Activated CD4-positive, alpha-beta T cell treated with anti-CD3 and anti-CD28 coated beads for 36 hours (primary cell): ENCODE measurements at regions of chr19 and their contacts with region 1.

Region 1: DNA sequence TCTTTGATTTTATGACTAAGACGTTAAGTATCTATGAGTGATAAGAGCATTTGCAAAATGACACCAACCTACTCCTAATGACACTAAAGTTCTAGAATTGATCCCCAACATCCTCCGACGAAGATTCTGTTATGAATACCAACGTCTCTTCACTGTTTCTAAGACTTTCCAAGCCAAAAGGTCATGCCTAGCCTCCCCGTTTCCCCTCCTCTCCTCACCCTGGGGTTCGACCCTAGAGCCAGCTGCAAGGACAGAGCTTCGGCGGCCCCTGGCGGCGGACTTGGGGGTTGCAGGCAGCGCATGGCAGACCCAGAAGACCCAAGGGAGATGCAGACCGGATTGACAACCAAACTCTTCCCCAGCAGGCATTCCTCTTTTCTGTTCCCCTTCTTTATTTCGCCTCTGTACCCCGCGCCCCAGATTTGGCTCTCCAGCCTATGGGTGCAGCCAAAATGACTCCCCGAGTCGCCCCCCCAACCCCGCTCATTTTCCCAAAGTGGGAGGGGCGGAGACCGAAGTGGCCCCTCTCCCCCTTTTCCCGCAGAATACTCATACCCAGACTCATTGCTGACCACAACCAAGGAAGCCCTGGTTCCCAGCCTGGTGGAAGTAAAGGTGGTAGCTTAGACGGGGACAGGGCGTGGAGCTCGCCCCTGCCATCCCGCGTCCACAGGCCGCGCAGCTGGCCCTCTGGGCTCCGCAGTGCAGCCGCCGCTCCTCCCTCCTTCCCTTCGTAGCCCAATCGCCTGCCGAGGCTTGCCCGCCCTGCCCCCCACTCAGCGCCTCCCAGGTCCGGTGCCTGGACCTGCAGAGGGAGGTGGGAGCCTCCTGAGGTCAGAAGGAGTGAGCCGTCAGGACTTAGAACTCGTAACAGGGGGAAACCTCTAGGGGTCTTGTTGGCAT is 4.1 kb upstream of the EML2 start:
- DNase-seq: peak; percentile 97
- ATAC-seq: peak; percentile 54
- H3K4me3 Mint-ChIP-seq: peak overlapping the region; percentile 94
- H3K27ac Mint-ChIP-seq: peak overlapping the region; percentile 93
- H3K4me1 Mint-ChIP-seq: peaks cover 57% of the 10 kb centered on the region
- H3K27me3 Mint-ChIP-seq: no peaks in the 10 kb centered on the region

Region 2: GRCh38 chr19:45423589-45424190 is 219.6 kb before region 1 on chr19 and contains the start of gene ERCC1:
- CTCF ChIA-PET with region 1: no interaction called
- POLR2A ChIA-PET with region 1: no interaction called
- intact Hi-C with region 1: loop called in 1 of 2 experiments (anchors 1 kb)
- DNase-seq: peak; percentile 84
- ATAC-seq: peak; percentile 78
- H3K4me3 Mint-ChIP-seq: peak within 1 kb of the TSS; percentile 92
- H3K27ac Mint-ChIP-seq: peak within 1 kb of the TSS; percentile 95
- H3K4me1 Mint-ChIP-seq: peaks cover 55% of the 10 kb centered on the region
- H3K27me3 Mint-ChIP-seq: peaks cover 2% of the 10 kb centered on the region
- total RNA-seq, gene ERCC1: 58.1 to 71.8 TPM

Region 3: GRCh38 chr19:45496349-45496953 is 146.8 kb before region 1 on chr19:
- CTCF ChIA-PET with region 1: interaction called, 10 read pairs
- POLR2A ChIA-PET with region 1: interaction called, 3 read pairs
- intact Hi-C with region 1: loop called in 1 of 2 experiments (anchors 2 kb)
- DNase-seq: peak; percentile 74
- ATAC-seq: peak; percentile 1
- H3K4me3 Mint-ChIP-seq: peak overlapping the region; percentile 6
- H3K27ac Mint-ChIP-seq: no peak overlapping the region
- H3K4me1 Mint-ChIP-seq: peaks cover 43% of the 10 kb centered on the region
- H3K27me3 Mint-ChIP-seq: peaks cover 31% of the 10 kb centered on the region

Region 4: DNA sequence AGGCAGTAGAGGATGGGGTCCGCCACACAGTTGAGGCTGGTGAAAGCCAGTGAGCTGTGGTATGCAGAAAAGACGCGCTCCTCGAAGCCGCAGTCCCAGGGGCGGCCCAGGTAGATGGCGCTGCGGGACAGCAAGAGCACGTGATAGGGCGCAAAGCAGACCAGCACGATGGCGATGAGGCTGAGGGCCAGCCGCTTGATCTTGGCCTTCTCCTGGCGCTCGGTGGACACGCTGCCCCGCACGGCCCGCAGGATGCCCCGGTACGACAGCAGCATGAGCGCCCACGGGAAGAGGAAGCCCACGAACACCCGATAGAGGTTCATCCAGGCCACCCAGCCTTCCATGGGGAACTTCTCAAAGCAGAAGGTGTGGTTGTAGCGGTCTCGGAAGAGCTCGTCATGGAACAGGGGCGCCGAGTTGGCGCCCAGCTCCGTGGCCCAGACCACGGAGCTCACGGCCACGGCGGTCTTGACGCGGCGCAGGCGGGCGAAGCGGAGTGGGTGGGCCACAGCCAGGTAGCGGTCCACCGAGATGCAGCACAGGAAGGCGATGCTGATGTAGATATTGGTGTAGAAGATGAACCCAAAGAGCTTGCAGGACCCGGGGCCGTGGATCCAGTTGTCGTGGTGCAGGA is 52.2 kb before region 1 on chr19:
- CTCF ChIA-PET with region 1: interaction called, 9 read pairs
- POLR2A ChIA-PET with region 1: no interaction called
- intact Hi-C with region 1: loop called in 1 of 2 experiments (anchors 1 kb)
- DNase-seq: peak; percentile 79
- ATAC-seq: peak; percentile 89
- H3K4me3 Mint-ChIP-seq: no peak overlapping the region
- H3K27ac Mint-ChIP-seq: no peak overlapping the region
- H3K4me1 Mint-ChIP-seq: peaks cover 11% of the 10 kb centered on the region
- H3K27me3 Mint-ChIP-seq: peaks cover 30% of the 10 kb centered on the region

Region 5: DNA sequence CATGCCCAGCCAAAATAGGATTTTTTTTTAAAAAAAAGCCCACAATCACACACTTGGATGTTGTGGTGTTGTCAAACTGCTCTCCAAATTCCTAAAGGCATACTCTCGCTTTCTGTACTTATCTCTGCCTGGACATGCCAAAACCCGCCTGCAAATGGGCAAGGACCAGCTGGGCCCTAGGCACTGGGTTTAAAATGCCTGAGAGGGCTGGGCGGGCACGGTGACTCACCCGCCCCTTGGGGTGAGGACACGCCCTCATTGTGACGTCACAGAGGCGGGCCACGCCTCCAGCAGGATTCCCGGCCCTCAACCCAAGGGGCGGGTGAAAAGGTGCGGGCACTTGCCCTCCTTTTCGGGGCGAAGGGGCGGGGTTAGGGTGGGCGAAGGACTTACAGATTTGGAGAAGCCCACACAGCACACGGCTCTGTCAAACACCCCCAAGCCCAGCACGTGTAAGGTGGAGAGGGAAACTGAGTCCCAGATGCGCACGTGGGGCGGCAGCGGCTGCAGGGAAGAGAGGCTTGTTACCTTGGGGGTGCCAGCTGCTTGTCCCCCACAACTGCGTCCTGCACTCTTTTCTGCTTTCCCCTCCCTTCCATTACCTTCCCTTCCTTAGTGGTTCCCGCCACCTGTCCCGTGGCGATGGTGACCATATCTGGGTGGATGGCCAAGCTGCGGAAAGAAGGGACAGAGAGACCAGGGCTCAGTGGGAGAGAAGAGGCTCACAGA is 10.6 kb before region 1 on chr19:
- CTCF ChIA-PET with region 1: interaction called, 24 read pairs
- POLR2A ChIA-PET with region 1: interaction called, 17 read pairs
- intact Hi-C with region 1: loop called (anchors 1 kb)
- DNase-seq: peak; percentile 79
- ATAC-seq: peak; percentile 54
- H3K4me3 Mint-ChIP-seq: no peak overlapping the region
- H3K27ac Mint-ChIP-seq: peak overlapping the region; percentile 60
- H3K4me1 Mint-ChIP-seq: peaks cover 19% of the 10 kb centered on the region
- H3K27me3 Mint-ChIP-seq: no peaks in the 10 kb centered on the region

Region 6: DNA sequence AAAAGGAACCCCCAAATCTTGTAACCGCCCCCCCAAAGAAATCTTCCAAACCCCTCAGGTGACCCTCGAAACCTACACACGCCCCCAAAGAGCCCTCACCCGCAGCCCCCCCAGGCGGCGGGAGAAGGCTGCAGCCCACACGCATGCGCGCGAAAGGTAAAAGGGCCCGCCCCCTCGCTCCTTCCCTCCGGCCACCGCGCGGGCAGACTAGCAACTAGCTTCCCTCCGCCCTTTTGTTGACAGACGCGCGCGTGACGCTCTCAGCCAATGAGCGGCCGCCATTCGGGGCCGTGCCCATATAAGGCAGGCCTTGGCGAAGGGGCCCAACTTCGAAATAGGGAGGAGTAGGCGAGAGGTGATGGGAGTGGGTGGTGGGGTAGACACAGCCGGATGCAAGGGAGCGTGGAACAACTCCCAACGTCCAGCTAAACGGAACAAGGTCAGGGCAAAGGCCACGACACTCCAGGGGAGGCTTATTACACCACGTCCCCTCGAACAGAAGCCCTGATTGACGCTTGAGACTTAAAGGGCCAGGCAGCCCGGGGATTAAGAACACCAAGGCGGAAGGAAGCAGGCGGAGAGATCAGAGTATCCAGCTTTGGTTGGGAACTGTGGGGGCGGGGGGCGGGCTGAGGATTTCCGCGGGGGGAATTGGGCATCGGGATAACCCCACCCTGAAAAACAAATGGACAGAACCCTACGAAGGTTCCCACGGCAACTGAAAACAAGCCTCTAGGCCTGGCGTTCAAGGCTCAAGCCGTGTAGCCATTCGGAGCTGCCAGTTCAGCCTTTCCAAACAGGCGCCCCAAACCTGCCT is 74.1 kb after region 1 on chr19:
- CTCF ChIA-PET with region 1: no interaction called
- POLR2A ChIA-PET with region 1: interaction called, 8 read pairs
- intact Hi-C with region 1: loop called in 1 of 2 experiments (anchors 1 kb)
- DNase-seq: peak; percentile 99
- ATAC-seq: peak; percentile 97
- H3K4me3 Mint-ChIP-seq: peak overlapping the region; percentile 93
- H3K27ac Mint-ChIP-seq: peak overlapping the region; percentile 94
- H3K4me1 Mint-ChIP-seq: peaks cover 40% of the 10 kb centered on the region
- H3K27me3 Mint-ChIP-seq: no peaks in the 10 kb centered on the region